ENCODE measurements at regions of chr6 and their contacts with region 1.

Region 1: GRCh38 chr6:13194852-13195251 is 133.5 kb downstream of the TBC1D7 start:
- DNase-seq: peak; percentile 65
- ATAC-seq: peak; percentile 79
- H3K4me3 ChIP-seq: no peak overlapping the region
- H3K27ac ChIP-seq: no peak overlapping the region
- H3K4me1 ChIP-seq: no peaks in the 10 kb centered on the region
- H3K27me3 ChIP-seq: peaks cover 4% of the 10 kb centered on the region; the same call in 1 of the 2 replicates
- CTCF ChIP-seq: peak; percentile 68
- POLR2A ChIP-seq: no peak
- RAD21 ChIP-seq: peak; percentile 62

Region 2: GRCh38 chr6:13079096-13079723 is 115.6 kb before region 1 on chr6:
- CTCF ChIA-PET with region 1: no interaction called
- POLR2A ChIA-PET with region 1: no interaction called
- dilution Hi-C with region 1: no loop called
- in situ Hi-C with region 1: no loop called
- intact Hi-C with region 1: no loop called
- DNase-seq: no peak
- ATAC-seq: no peak
- H3K4me3 ChIP-seq: no peak overlapping the region
- H3K27ac ChIP-seq: no peak overlapping the region
- H3K4me1 ChIP-seq: no peaks in the 10 kb centered on the region
- H3K27me3 ChIP-seq: no peaks in the 10 kb centered on the region
- CTCF ChIP-seq: no peak
- POLR2A ChIP-seq: no peak
- RAD21 ChIP-seq: no peak

Region 3: GRCh38 chr6:13302751-13303667 is 108.2 kb after region 1 on chr6:
- CTCF ChIA-PET with region 1: no interaction called
- POLR2A ChIA-PET with region 1: no interaction called
- dilution Hi-C with region 1: no loop called
- in situ Hi-C with region 1: no loop called
- intact Hi-C with region 1: loop called (anchors 1 kb)
- DNase-seq: peak; percentile 98
- ATAC-seq: peak; percentile 81
- H3K4me3 ChIP-seq: peak overlapping the region; percentile 13; the same call in 1 of the 2 replicates
- H3K27ac ChIP-seq: peak overlapping the region; percentile 84
- H3K4me1 ChIP-seq: peaks cover 10% of the 10 kb centered on the region
- H3K27me3 ChIP-seq: no peaks in the 10 kb centered on the region
- CTCF ChIP-seq: no peak
- POLR2A ChIP-seq: no peak
- RAD21 ChIP-seq: no peak

Region 4: DNA sequence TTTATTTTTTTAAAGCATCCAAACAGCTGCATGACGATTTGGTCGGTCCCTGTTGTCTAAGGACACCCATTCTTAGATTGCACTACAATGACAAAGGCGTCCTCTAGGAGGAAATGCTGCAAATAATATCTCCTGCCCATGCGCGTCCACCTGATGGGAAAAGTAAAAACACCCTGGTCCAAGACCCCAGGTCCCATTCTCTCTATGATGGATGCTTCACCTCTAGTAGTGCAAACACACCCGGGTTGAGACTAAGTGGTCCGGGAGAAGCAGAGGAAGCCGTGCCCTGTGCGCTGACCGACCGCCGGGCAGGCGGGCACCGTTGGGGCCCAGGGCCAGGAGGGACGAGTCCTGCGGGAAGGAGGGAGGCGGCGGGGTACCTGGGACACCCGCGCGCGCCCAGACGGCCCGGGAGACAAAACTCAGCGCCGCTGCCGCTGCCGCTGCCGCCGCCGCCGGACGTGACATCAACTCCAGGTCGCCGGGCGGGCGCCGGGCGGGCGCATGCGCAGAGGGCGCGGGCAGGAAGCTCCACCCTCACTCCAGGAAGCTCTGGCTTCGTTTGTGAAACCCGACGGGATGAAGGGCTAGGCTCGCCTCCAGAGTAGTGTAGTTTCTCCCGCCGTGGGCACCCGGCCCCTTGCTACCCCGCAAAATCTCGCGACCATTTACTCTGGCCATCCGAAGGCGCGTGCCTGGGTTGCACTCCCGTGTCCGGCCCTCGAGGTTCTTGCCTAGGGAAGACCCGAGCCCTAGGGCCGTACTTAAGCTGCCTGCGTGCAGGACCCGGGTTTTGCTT is 133.4 kb after region 1 on chr6 and contains the start of gene TBC1D7:
- CTCF ChIA-PET with region 1: interaction called, 7 read pairs
- POLR2A ChIA-PET with region 1: no interaction called
- dilution Hi-C with region 1: no loop called
- in situ Hi-C with region 1: no loop called
- intact Hi-C with region 1: loop called (anchors 1 kb)
- DNase-seq: peak; percentile 88
- ATAC-seq: peak; percentile 97
- H3K4me3 ChIP-seq: peak within 1 kb of the TSS; percentile 87
- H3K27ac ChIP-seq: peak within 1 kb of the TSS; percentile 82
- H3K4me1 ChIP-seq: no peaks in the 10 kb centered on the region; the same call in none of the 2 replicates
- H3K27me3 ChIP-seq: no peaks in the 10 kb centered on the region
- CTCF ChIP-seq: no peak; the same call in 1 of the 2 replicates
- POLR2A ChIP-seq: peak; percentile 73
- RAD21 ChIP-seq: no peak; the same call in 1 of the 2 replicates
- total RNA-seq, gene TBC1D7: 14.3 and 16.4 TPM in 2 replicates

Region 5: GRCh38 chr6:13538084-13538483 is 343.2 kb after region 1 on chr6:
- CTCF ChIA-PET with region 1: interaction called, 4 read pairs
- POLR2A ChIA-PET with region 1: no interaction called
- dilution Hi-C with region 1: no loop called
- in situ Hi-C with region 1: loop called (anchors 25 kb)
- intact Hi-C with region 1: no loop called
- DNase-seq: peak; percentile 61
- ATAC-seq: peak; percentile 60
- H3K4me3 ChIP-seq: no peak overlapping the region
- H3K27ac ChIP-seq: no peak overlapping the region
- H3K4me1 ChIP-seq: no peaks in the 10 kb centered on the region
- H3K27me3 ChIP-seq: peaks cover 9% of the 10 kb centered on the region
- CTCF ChIP-seq: peak; percentile 57
- POLR2A ChIP-seq: no peak
- RAD21 ChIP-seq: peak; percentile 66